ENCODE measurements at regions of chr17 and their contacts with region 1.

Region 1: GRCh38 chr17:45948881-45949624 is 50.0 kb upstream of the STH start:
- DNase-seq: peak; percentile 82
- ATAC-seq: peak; percentile 97
- H3K4me3 Mint-ChIP-seq: no peak overlapping the region
- H3K27ac Mint-ChIP-seq: no peak overlapping the region
- H3K4me1 Mint-ChIP-seq: peaks cover 2% of the 10 kb centered on the region
- H3K27me3 Mint-ChIP-seq: peaks cover 32% of the 10 kb centered on the region

Region 2: DNA sequence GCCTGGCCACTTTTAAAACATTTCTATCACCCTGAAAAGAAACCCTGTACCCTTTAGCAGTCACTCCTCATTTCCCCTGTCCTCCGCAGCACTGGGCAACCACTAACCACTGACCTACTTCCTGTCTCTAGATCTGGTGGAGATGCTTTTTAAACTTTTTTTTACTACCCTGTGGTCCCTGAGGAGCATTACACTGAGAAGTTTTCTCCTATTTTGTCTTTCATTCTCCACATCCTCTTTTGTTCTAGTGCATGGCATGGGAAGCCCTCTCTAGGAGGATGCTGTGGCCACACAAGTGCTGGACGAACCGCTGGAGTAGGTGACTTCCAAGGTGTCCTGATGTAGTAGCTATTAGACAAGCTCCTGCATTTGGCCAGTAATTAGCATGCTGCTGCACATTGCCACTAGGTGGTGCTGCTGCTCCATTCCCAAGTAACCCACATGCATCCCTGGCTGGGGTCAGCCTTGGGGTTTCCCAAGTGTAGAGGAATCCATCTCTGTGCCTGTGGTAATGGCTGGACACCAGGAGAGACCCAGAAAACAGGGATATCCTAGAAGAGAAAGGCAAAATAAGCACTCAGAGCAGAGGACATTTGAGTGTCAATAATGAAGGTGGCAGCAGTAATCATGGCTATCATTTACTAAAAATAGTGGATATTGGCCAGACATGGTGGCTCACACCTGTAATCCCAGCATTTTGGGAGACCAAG is 308.8 kb before region 1 on chr17:
- CTCF ChIA-PET with region 1: interaction called, 4 read pairs
- POLR2A ChIA-PET with region 1: no interaction called
- intact Hi-C with region 1: loop called in 1 of 2 experiments (anchors 10 kb)
- DNase-seq: peak; percentile 84
- ATAC-seq: peak; percentile 80
- H3K4me3 Mint-ChIP-seq: no peak overlapping the region
- H3K27ac Mint-ChIP-seq: peak overlapping the region; percentile 40
- H3K4me1 Mint-ChIP-seq: peaks cover 4% of the 10 kb centered on the region
- H3K27me3 Mint-ChIP-seq: no peaks in the 10 kb centered on the region

Region 3: GRCh38 chr17:45894022-45894784 is 54.9 kb before region 1 on chr17 and contains the start of gene MAPT:
- CTCF ChIA-PET with region 1: interaction called, 7 read pairs
- POLR2A ChIA-PET with region 1: no interaction called
- intact Hi-C with region 1: loop called in 1 of 2 experiments (anchors 1 kb)
- DNase-seq: peak; percentile 90
- ATAC-seq: peak; percentile 91
- H3K4me3 Mint-ChIP-seq: peak within 1 kb of the TSS; percentile 75
- H3K27ac Mint-ChIP-seq: no peak within 1 kb of the TSS
- H3K4me1 Mint-ChIP-seq: peaks cover 19% of the 10 kb centered on the region
- H3K27me3 Mint-ChIP-seq: peaks cover 36% of the 10 kb centered on the region
- total RNA-seq, gene MAPT: 0.75 to 1.7 TPM

Region 4: DNA sequence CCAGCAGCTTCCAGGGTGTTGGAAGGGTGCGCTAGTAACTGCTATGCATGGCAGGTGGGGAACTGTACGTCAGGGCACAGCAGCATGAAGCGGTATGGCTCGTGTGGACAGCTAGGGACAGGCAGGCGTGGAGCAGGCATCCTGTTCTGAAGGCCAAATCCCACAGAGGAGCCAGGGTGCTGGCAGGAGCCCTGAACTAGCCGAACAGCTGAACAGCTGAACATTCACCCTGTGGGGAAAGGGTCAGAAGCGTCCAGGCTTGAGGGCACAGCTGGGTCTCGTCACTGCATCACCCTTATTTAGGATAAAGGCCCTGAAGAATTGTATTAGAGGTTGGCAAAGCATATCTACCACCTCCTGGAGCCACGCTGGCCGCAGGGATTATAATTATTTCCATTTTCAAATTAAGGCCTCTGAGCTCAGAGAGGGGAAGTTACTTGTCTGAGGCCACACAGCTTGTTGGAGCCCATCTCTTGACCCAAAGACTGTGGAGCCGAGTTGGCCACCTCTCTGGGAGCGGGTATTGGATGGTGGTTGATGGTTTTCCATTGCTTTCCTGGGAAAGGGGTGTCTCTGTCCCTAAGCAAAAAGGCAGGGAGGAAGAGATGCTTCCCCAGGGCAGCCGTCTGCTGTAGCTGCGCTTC is 46.7 kb after region 1 on chr17:
- CTCF ChIA-PET with region 1: no interaction called
- POLR2A ChIA-PET with region 1: no interaction called
- intact Hi-C with region 1: no loop called
- DNase-seq: no peak
- ATAC-seq: no peak
- H3K4me3 Mint-ChIP-seq: no peak overlapping the region
- H3K27ac Mint-ChIP-seq: no peak overlapping the region
- H3K4me1 Mint-ChIP-seq: no peaks in the 10 kb centered on the region
- H3K27me3 Mint-ChIP-seq: no peaks in the 10 kb centered on the region

Region 5: GRCh38 chr17:46026166-46027047 is 77.4 kb after region 1 on chr17:
- CTCF ChIA-PET with region 1: no interaction called
- POLR2A ChIA-PET with region 1: no interaction called
- intact Hi-C with region 1: loop called in 1 of 2 experiments (anchors 2 kb)
- DNase-seq: no peak
- ATAC-seq: no peak
- H3K4me3 Mint-ChIP-seq: no peak overlapping the region
- H3K27ac Mint-ChIP-seq: no peak overlapping the region
- H3K4me1 Mint-ChIP-seq: peaks cover 4% of the 10 kb centered on the region
- H3K27me3 Mint-ChIP-seq: no peaks in the 10 kb centered on the region